ENCODE measurements at regions of chr7 and their contacts with region 1.

Region 1: DNA sequence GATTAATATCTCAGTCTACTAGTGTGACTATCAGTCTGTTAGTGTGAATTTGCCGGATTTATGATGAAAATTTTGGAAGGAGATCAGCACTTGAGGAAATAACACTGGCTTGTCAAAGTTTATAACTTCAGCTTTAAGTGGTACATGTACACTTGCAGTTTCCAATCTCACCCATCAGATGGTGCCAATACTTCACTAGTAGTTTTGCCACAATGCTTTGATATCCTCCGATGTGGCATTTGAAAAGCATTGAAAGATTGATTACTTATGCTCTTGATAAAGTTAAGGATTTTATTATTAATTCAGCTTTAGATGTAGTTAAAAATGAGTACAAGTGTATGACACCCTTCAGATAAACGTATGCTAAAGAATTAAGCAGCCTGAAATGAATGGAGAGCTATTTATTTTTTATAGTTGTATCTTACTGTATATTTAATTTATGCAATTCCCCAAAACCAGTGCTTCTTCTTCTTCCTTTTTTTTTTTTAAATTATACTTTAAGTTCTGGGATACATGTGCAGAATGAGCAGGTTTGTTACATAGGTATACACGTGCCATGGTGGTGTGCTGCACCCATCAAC is 98.2 kb downstream of the ANLN start:
- DNase-seq: peak; percentile 63
- H3K4me3 ChIP-seq: no peak overlapping the region; a peak in 1 of 4 replicates
- H3K27ac ChIP-seq: no peak overlapping the region
- H3K4me1 ChIP-seq: 0 out of 4 replicates have a peak, but pooled peaks cover 0 to 2% of the 10 kb centered on the region in 2 experiments
- H3K27me3 ChIP-seq: no peaks in the 10 kb centered on the region
- CTCF ChIP-seq: peak; percentile 99
- EP300 ChIP-seq: peak in 1 of 2 experiments; percentile 14; a peak in 1 of 4 replicates
- RAD21 ChIP-seq: peak; percentile 100

Region 2: DNA sequence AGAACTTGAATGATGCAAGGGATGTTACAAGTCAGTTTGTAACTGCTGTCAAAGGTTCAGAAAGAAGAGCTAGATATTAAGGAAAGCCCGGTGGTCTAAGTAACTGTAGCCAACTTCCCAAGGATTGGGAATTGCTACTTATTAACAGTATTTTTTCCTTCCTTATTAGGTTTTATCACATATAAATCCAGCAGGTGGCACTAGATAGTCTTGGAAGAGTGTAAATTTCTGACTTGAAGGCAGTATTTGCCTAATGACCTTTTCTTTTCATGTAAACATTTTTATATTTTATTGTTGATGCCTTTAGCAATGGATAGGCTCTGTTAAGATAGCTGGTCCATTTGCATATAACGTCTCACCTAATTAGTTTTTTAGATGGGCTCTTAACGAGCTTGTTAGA is 47.0 kb before region 1 on chr7:
- CTCF ChIA-PET with region 1: interaction called, 25 read pairs
- POLR2A ChIA-PET with region 1: interaction called, 5 read pairs
- DNase-seq: peak; percentile 53
- H3K4me3 ChIP-seq: no peak overlapping the region
- H3K27ac ChIP-seq: no peak overlapping the region
- H3K4me1 ChIP-seq: no peaks in the 10 kb centered on the region
- H3K27me3 ChIP-seq: no peaks in the 10 kb centered on the region
- CTCF ChIP-seq: peak; percentile 77
- EP300 ChIP-seq: no peak
- RAD21 ChIP-seq: peak; percentile 72

Region 3: DNA sequence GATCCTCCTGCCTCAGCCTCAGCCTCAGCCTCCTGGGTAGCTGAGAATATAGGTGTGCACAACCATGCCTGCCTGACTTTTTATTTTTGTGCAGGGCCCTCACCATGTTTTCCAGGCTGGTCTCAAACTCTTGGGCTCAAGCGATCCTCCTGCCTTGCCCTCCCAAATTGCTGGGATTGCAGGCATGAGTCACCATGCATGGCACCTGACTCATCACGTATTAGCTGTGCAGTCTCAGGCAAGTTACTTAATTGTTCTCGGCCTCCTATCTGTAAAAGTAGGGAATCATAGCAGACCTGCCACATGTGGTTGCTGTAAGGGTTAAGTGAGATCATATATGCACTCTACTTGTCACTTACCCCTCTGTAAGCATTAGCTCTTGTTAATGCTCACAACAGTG is 19.0 kb after region 1 on chr7:
- CTCF ChIA-PET with region 1: interaction called, 25 read pairs
- POLR2A ChIA-PET with region 1: no interaction called
- DNase-seq: no peak
- H3K4me3 ChIP-seq: no peak overlapping the region
- H3K27ac ChIP-seq: no peak overlapping the region
- H3K4me1 ChIP-seq: peaks cover 0 to 9% of the 10 kb centered on the region in 2 experiments; a peak in 1 of 4 replicates
- H3K27me3 ChIP-seq: no peaks in the 10 kb centered on the region; the same call in 1 of the 2 replicates
- CTCF ChIP-seq: no peak
- EP300 ChIP-seq: no peak
- RAD21 ChIP-seq: no peak

Region 4: GRCh38 chr7:36538126-36538525 is 50.3 kb after region 1 on chr7:
- CTCF ChIA-PET with region 1: no interaction called
- POLR2A ChIA-PET with region 1: no interaction called
- DNase-seq: no peak
- H3K4me3 ChIP-seq: no peak overlapping the region
- H3K27ac ChIP-seq: no peak overlapping the region
- H3K4me1 ChIP-seq: no peaks in the 10 kb centered on the region; a peak in 1 of 4 replicates
- H3K27me3 ChIP-seq: no peaks in the 10 kb centered on the region
- CTCF ChIP-seq: no peak
- EP300 ChIP-seq: no peak
- RAD21 ChIP-seq: no peak

Region 5: GRCh38 chr7:36670585-36671431 is 183.0 kb after region 1 on chr7:
- CTCF ChIA-PET with region 1: interaction called, 58 read pairs
- POLR2A ChIA-PET with region 1: no interaction called
- DNase-seq: peak; percentile 70
- H3K4me3 ChIP-seq: no peak overlapping the region; a peak in 1 of 4 replicates
- H3K27ac ChIP-seq: no peak overlapping the region
- H3K4me1 ChIP-seq: no peaks in the 10 kb centered on the region; a peak in 1 of 4 replicates
- H3K27me3 ChIP-seq: no peaks in the 10 kb centered on the region; the same call in 1 of the 2 replicates
- CTCF ChIP-seq: peak; percentile 99
- EP300 ChIP-seq: no peak
- RAD21 ChIP-seq: peak; percentile 86

Region 6: DNA sequence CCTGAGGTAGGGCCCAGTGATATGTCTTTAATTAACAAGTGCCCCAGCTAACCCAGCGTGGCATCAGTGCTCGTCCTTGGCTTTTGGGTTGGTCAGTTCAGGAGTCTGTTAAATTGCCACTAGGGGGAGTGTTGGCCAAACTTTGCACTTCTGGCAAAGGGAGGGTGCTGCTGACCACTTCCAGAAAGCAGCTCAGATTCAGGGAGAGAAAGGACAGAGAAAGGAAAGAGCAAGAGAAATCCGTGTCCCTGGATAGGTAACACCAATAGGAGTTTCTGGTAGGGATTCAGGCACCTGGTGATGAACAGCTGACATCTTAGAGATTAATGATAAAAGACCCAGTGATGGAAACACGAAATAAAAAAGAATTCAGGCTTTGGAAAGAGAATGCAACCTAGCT is 479.5 kb after region 1 on chr7:
- CTCF ChIA-PET with region 1: interaction called, 55 read pairs
- POLR2A ChIA-PET with region 1: no interaction called
- DNase-seq: peak; percentile 79
- H3K4me3 ChIP-seq: no peak overlapping the region
- H3K27ac ChIP-seq: peak overlapping the region in 1 of 2 experiments; percentile 99; a peak in 2 of 4 replicates
- H3K4me1 ChIP-seq: peaks cover 0 to 30% of the 10 kb centered on the region in 2 experiments; a peak in 2 of 4 replicates
- H3K27me3 ChIP-seq: no peaks in the 10 kb centered on the region
- CTCF ChIP-seq: peak; percentile 96
- EP300 ChIP-seq: peak in 1 of 2 experiments; percentile 25; a peak in 1 of 4 replicates
- RAD21 ChIP-seq: peak; percentile 95

Region 7: DNA sequence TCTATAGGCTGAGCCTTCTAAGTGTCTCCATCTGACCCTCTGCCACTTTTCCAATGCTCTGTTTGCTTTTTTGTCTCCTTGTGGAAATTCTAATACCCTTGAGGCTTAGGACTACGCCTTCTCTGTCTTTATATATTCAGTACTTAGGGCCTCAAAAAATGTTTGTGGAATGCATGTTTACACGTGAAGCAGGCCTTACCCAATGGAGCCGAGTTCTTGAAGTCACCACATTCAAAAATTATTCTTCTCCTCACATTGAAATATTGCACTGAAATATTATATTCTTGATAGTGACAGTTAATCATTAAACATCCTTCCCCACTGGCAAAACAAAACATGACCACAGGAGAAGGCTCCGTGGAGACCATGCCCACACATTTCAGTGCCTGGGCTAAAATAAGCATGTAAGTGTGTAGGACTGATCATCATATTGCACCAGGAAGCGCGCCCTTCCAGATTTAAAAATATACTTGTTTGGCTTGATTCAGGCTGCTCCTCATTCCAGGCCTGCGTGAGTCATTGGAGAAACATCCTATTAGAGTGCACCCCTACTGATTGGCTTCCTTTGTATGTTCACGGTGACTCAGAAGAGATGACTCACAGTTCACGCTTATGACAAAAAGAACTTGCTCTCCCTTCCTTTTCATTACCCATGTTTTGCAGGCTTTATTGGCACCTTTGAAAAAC is 543.9 kb after region 1 on chr7:
- CTCF ChIA-PET with region 1: interaction called, 19 read pairs
- POLR2A ChIA-PET with region 1: no interaction called
- DNase-seq: no peak
- H3K4me3 ChIP-seq: no peak overlapping the region
- H3K27ac ChIP-seq: peak overlapping the region; percentile 36 to 64; a peak in 3 of 4 replicates
- H3K4me1 ChIP-seq: peaks cover 14 to 19% of the 10 kb centered on the region in 2 experiments
- H3K27me3 ChIP-seq: no peaks in the 10 kb centered on the region
- CTCF ChIP-seq: no peak
- EP300 ChIP-seq: peak in 1 of 2 experiments; percentile 90; a peak in 1 of 4 replicates
- RAD21 ChIP-seq: no peak

Region 8: DNA sequence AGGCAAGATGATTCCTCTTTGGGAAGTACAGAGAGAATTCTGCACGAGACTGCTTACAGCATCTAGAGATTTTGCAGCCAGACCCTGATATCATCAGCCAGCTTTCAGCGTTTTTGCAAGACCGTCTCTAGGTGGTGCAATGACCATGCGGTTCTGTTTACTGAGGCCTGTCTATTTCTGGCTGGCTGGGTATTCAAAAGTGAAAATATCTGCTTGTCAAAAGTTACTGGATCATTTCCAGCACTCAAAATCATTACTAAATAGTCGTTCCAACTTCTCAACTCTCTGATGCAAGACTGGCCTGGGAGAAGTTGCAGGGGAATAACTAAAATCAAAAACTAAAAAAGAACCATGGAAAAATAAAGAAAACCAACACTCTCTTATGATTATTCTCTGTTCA is 720.7 kb after region 1 on chr7:
- CTCF ChIA-PET with region 1: interaction called, 26 read pairs
- POLR2A ChIA-PET with region 1: no interaction called
- DNase-seq: peak; percentile 73
- H3K4me3 ChIP-seq: no peak overlapping the region
- H3K27ac ChIP-seq: peak overlapping the region in 1 of 2 experiments; percentile 29; a peak in 1 of 4 replicates
- H3K4me1 ChIP-seq: peaks cover 0 to 3% of the 10 kb centered on the region in 2 experiments; a peak in 2 of 4 replicates
- H3K27me3 ChIP-seq: no peaks in the 10 kb centered on the region
- CTCF ChIP-seq: peak; percentile 61
- EP300 ChIP-seq: no peak
- RAD21 ChIP-seq: peak; percentile 98